ENCODE measurements at regions of chr20 and their contacts with region 1.

Region 1: DNA sequence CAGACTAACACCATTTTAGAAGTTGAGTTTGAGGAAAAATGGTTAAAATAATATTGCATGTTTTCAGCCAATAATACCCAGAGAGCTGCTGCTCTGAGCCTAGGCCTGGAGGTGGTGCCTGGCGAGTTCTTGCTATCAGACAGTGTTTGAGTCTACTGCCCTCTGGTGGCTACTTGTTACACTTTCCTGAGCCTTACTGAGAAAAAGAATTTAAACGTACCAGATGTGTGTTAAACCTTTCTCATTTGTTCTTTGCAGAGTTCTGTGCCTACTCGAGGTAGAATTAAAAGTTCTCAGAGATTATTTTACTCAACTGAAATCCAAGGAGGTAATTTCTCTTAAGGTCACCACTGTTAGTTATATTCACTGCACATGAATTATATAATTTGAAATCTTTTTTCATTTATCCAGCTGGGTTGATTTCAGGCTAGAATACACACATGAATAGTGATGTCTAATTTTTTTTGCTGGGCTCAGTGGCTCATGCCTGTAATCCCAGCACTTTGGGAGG is 38.2 kb downstream of the SHLD1 start:
- DNase-seq: peak; percentile 59 to 64
- H3K4me3 ChIP-seq: no peak overlapping the region
- H3K27ac ChIP-seq: no peak overlapping the region
- H3K4me1 ChIP-seq: peaks cover 16% of the 10 kb centered on the region
- H3K27me3 ChIP-seq: no peaks in the 10 kb centered on the region
- CTCF ChIP-seq: peak; percentile 93

Region 2: DNA sequence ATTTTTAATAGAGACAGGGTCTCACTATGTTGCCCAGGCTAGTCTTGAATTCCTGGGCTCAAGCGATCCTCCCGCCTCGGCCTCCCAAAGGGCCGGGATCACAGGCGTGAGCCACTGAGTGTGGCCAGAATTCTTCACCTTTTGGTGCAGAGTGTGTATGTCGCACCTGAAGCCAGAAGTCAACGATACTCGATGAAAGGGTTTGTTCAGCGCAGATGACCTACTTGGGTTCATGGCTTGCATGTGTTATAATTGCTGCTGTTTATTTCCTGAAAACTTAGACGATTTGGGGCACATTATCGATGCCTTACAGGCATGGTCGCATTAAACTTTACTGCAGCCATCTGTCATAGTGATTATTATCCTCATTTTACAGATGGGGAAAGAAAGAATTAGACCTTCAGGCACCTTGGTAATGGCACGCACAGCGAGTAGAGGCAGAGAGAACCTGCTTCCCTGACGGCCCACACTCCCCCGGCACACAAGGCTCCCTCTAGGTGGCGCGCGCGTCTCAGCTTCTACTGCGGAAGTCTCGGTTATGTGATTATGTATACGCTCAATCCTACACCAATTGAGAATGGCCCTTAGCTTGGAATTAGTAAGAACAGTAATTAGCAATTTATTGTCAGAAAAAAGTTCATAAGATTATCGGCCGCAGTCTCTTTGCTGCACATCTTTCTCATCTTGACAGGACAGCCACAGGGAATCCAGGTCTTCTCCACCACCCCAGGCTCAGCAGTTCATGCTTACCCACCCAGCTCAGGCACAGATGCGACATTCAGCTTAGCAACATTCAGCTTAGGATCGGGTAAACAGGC is 258.9 kb before region 1 on chr20:
- CTCF ChIA-PET with region 1: no interaction called
- POLR2A ChIA-PET with region 1: no interaction called
- intact Hi-C with region 1: loop called (anchors 1 kb)
- DNase-seq: peak; percentile 52 to 81
- H3K4me3 ChIP-seq: no peak overlapping the region
- H3K27ac ChIP-seq: no peak overlapping the region
- H3K4me1 ChIP-seq: no peaks in the 10 kb centered on the region
- H3K27me3 ChIP-seq: peaks cover 10% of the 10 kb centered on the region; the same call in 1 of the 2 replicates
- CTCF ChIP-seq: peak; percentile 76

Region 3: GRCh38 chr20:5557123-5557522 is 231.3 kb before region 1 on chr20:
- CTCF ChIA-PET with region 1: interaction called, 7 read pairs
- POLR2A ChIA-PET with region 1: no interaction called
- intact Hi-C with region 1: loop called (anchors 1 kb)
- DNase-seq: peak; percentile 42 to 48
- H3K4me3 ChIP-seq: no peak overlapping the region
- H3K27ac ChIP-seq: no peak overlapping the region
- H3K4me1 ChIP-seq: no peaks in the 10 kb centered on the region
- H3K27me3 ChIP-seq: no peaks in the 10 kb centered on the region
- CTCF ChIP-seq: peak; percentile 78

Region 4: DNA sequence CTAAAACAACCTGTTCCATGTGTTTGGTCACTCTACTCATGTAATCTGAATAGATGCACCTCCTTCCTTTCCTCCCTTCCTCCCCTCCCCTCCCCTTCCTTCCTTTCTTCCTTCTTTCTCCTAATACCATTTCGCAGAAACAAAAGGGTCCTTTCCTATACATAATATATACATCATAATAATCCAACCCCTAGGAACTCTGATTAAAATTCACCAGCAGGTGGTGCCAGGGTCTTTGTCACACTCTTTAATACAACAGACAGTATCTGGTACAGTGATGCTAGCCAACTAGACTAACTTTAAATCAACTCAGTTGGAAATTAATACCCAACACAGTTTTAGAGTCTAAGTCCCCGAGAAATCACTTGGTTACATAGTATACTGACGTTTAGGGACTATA is 219.4 kb before region 1 on chr20:
- CTCF ChIA-PET with region 1: interaction called, 5 read pairs
- POLR2A ChIA-PET with region 1: no interaction called
- intact Hi-C with region 1: loop called (anchors 1 kb)
- DNase-seq: peak; percentile 31 to 42
- H3K4me3 ChIP-seq: no peak overlapping the region
- H3K27ac ChIP-seq: no peak overlapping the region
- H3K4me1 ChIP-seq: no peaks in the 10 kb centered on the region
- H3K27me3 ChIP-seq: no peaks in the 10 kb centered on the region
- CTCF ChIP-seq: peak; percentile 81

Region 5: DNA sequence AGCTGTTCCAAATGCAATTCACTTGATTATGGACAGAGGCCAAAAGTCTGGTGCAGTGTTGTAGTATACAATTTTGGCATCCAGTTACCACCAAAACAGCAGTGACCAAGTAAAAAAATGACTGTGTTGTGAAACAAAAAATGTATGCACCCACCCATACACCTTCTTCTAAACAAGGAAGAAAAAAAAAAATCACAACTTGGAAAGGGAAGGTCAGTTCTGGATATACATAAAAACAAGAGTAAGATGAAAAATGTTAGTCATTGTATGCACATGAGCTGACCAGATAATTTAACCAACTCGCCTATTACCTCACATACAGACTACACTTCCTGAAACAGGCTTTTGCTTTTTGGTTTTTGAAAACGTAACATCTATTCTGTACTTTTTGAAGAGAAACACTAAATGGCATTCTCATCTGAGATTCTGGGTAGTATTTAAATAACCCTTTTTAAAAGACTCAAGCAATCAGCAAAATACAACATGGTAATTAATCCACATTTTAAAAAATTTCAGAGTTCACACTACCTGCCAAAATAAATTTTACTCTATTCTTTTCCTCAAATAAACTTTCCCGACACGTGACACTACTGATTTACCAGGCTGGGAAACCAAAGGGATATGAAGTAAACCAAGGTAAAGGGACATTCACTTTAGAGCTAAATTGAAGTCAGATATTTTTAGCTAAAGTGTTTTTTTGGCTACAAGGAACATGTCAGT is 179.8 kb before region 1 on chr20:
- CTCF ChIA-PET with region 1: interaction called, 10 read pairs
- POLR2A ChIA-PET with region 1: interaction called, 3 read pairs
- intact Hi-C with region 1: loop called (anchors 5 kb)
- DNase-seq: peak in 1 of 2 experiments; percentile 52
- H3K4me3 ChIP-seq: peak overlapping the region; percentile 97; the same call in 1 of the 2 replicates
- H3K27ac ChIP-seq: peak overlapping the region; percentile 64
- H3K4me1 ChIP-seq: peaks cover 29% of the 10 kb centered on the region
- H3K27me3 ChIP-seq: no peaks in the 10 kb centered on the region
- CTCF ChIP-seq: no peak

Region 6: DNA sequence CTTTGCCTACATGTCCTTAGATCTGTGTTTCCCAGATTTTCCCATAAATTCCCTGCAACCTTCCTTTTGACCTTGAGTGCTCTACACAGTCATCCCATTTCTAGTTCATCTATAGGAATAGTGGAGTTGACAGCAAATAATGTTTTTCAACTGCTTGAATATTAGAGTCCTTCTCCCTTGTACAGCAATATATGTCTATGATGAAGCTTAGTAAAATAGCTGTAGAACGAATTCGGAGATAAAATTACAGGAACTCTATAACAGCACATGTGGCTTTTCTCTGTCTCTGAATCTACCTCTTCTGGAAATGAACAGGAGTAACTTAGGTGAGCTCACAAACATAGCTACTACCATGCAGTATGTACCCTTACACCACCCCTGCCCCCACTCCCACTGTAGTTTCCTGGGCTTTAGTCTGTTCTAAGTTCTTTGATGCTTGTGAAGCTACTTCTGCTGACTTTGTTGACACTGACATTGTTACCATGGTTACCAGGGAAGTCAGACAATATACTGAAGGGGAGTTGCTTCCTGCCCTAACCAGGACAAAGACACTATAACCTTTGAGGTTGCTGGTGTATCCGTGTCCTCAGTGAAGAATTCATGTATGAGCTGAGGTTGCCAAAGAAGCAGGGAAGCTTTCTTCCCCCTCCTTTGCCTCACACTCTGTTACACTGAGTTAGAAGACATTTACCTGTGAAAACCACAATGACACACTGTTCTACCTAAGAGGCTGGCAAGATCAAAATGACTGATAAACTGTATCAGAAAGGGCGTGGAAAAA is 74.0 kb before region 1 on chr20:
- CTCF ChIA-PET with region 1: no interaction called
- POLR2A ChIA-PET with region 1: no interaction called
- intact Hi-C with region 1: loop called (anchors 5 kb)
- DNase-seq: peak; percentile 47 to 92
- H3K4me3 ChIP-seq: no peak overlapping the region
- H3K27ac ChIP-seq: no peak overlapping the region
- H3K4me1 ChIP-seq: peaks cover 19% of the 10 kb centered on the region
- H3K27me3 ChIP-seq: no peaks in the 10 kb centered on the region
- CTCF ChIP-seq: no peak

Region 7: GRCh38 chr20:5776077-5776476 is 12.4 kb before region 1 on chr20:
- CTCF ChIA-PET with region 1: no interaction called
- POLR2A ChIA-PET with region 1: no interaction called
- intact Hi-C with region 1: no loop called
- DNase-seq: no peak
- H3K4me3 ChIP-seq: no peak overlapping the region
- H3K27ac ChIP-seq: no peak overlapping the region
- H3K4me1 ChIP-seq: peaks cover 17% of the 10 kb centered on the region
- H3K27me3 ChIP-seq: no peaks in the 10 kb centered on the region
- CTCF ChIP-seq: no peak

Region 8: GRCh38 chr20:5950271-5951031 is 162.0 kb after region 1 on chr20 and contains the starts of genes MCM8 and TRMT6:
- CTCF ChIA-PET with region 1: no interaction called
- POLR2A ChIA-PET with region 1: no interaction called
- intact Hi-C with region 1: loop called (anchors 10 kb)
- DNase-seq: peak; percentile 95 to 96
- H3K4me3 ChIP-seq: peak within 1 kb of the TSS; percentile 97
- H3K27ac ChIP-seq: peak within 1 kb of the TSS; percentile 45; the same call in 1 of the 2 replicates
- H3K4me1 ChIP-seq: peaks cover 26% of the 10 kb centered on the region
- H3K27me3 ChIP-seq: no peaks in the 10 kb centered on the region
- CTCF ChIP-seq: no peak
- total RNA-seq, gene MCM8: 18.2 and 22.4 TPM in 2 replicates
- total RNA-seq, gene TRMT6: 12.2 and 16.2 TPM in 2 replicates